BJ (cell line): ENCODE measurements at regions of chr9 and their contacts with region 1.

Region 1: GRCh38 chr9:98263482-98264357 is 8.3 kb upstream of the TBC1D2 start:
- DNase-seq: no peak
- H3K4me3 ChIP-seq: no peak overlapping the region
- H3K27me3 ChIP-seq: no peaks in the 10 kb centered on the region
- CTCF ChIP-seq: peak; percentile 95

Region 2: GRCh38 chr9:98074115-98074990 is 189.4 kb before region 1 on chr9:
- CTCF ChIA-PET with region 1: interaction called, 12 read pairs
- POLR2A ChIA-PET with region 1: interaction called, 3 read pairs
- DNase-seq: no peak
- H3K4me3 ChIP-seq: no peak overlapping the region
- H3K27me3 ChIP-seq: no peaks in the 10 kb centered on the region
- CTCF ChIP-seq: peak; percentile 93

Region 3: DNA sequence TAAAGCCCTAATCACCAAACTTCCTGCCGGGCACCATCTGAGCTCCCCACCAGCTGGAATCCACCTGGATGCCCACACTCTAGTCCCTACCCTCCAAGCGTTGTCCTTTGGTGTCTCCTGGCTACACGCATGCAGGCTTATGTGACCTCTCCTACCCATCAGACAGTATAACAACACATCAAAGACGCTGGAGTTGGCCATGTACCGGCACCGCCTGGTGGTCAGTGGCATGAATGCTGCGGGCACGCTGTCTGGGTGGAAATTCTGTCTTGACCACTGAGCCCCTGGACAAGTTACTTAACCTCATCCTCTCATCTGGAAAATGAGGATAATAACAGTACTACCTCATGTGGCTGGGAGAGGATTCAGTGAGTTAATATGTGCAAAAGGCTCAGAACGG is 47.9 kb before region 1 on chr9:
- CTCF ChIA-PET with region 1: interaction called, 14 read pairs
- POLR2A ChIA-PET with region 1: no interaction called
- DNase-seq: no peak
- H3K4me3 ChIP-seq: no peak overlapping the region
- H3K27me3 ChIP-seq: no peaks in the 10 kb centered on the region
- CTCF ChIP-seq: peak; percentile 56